ENCODE measurements at regions of chr13 and their contacts with region 1.

Region 1: GRCh38 chr13:51452361-51453206 is at the start of gene INTS6:
- DNase-seq: peak; percentile 99
- H3K4me3 Mint-ChIP-seq: peak within 1 kb of the TSS; percentile 94
- H3K27ac Mint-ChIP-seq: peak within 1 kb of the TSS; percentile 99
- H3K4me1 Mint-ChIP-seq: peaks cover 35% of the 10 kb centered on the region
- H3K27me3 Mint-ChIP-seq: no peaks in the 10 kb centered on the region
- total RNA-seq, gene INTS6: 40.4 to 41.0 TPM

Region 2: DNA sequence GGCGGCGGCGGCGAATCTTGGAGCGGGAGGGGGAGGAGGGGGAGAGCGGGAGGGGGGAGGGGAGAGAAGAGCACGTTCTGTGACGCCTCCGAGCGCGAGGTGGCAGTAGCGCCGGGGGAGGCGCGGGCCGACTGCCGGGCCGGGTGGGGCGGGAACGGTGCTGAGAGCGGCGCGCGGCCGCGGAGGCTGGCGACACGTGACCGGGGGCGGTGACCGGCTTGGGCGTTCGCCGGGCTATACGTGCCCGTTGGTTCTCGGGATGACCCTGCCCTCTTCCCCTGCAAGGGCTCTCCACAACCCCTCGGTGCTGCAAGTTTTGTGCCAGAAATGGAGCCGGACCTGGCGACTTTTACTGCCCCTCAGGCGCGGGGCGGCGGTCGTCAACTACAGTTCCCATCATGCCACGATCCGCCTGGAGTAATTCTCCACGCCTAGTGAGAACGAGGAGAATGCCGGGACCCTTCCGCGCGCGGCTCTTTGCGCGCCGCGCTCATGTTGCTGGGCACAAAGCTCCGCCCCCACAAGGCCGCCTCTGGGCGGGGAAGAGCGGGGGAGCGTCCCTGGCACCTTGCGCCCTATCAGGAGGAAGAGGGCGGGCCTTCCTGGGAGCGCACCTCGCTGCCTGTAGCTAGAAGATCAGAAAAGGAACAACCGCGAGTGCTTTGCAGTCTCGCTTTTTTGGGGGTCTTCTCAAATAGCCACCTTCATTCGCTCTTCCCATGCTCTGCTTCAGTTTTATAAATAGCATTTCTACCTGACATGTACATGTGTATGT is 1659.8 kb before region 1 on chr13 and contains the start of gene KPNA3:
- CTCF ChIA-PET with region 1: no interaction called
- intact Hi-C with region 1: loop called (anchors 2 kb)
- DNase-seq: peak; percentile 96
- H3K4me3 Mint-ChIP-seq: peak within 1 kb of the TSS; percentile 92
- H3K27ac Mint-ChIP-seq: peak within 1 kb of the TSS; percentile 94
- H3K4me1 Mint-ChIP-seq: peaks cover 29% of the 10 kb centered on the region
- H3K27me3 Mint-ChIP-seq: peaks cover 4% of the 10 kb centered on the region
- total RNA-seq, gene KPNA3: 47.9 to 50.7 TPM

Region 3: DNA sequence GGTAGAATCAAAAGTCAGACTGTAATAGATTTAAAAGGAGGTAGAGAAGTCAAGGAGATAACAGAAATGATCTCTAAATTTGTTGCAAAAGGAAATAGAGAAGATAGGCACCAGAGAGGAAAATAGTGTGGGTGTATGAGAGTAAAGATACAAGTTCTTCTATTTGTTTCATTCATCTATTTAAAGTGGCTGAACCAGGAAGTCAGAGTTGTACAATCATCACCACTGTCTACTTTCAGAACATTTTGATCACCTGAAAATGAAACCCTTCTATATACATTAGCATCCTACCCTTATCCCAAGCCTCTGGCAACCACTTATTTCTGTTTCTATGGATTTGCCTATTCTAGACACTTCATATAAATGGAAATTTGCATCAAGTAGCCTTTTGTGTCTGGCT is 36.5 kb before region 1 on chr13:
- CTCF ChIA-PET with region 1: no interaction called
- intact Hi-C with region 1: loop called (anchors 1 kb)
- DNase-seq: no peak
- H3K4me3 Mint-ChIP-seq: no peak overlapping the region
- H3K27ac Mint-ChIP-seq: peak overlapping the region; percentile 62
- H3K4me1 Mint-ChIP-seq: peaks cover 63% of the 10 kb centered on the region
- H3K27me3 Mint-ChIP-seq: no peaks in the 10 kb centered on the region

Region 4: DNA sequence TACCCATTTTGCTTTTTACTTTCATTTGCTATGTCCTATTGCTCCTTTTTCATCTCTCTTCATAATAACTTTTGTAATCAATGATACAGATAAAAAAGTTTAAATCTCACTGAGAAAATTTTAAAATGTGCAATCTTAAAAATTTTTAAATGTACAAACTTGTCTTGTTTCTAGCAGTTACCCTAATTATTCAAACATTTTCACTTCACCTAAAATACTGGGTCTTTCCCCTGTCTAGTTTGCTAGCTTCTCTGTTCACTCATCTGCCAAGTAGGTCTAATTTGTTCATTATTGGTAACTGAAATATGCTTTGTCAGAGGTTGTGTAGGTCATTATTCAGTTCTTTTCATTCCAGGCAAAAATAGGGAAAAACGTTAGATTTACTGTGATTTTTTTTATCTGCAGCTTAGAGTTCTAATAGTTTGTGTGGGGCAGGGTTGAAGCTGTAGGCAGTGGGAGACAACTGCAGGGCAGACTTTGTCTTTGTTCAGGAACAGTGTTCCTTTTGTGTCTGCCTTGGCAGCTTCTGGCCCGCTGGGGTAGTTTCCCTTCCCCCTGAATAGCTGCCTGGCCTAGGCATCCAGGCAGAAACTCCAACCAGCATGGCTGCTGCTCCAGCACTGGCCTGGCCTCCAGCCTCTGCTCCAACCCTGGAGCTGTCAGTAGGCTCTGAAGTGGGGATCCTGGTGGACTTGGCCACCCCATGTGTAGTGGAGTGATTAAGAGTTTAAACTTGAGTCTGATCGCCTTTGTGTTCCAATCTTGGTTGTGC is 180.2 kb after region 1 on chr13:
- CTCF ChIA-PET with region 1: no interaction called
- intact Hi-C with region 1: loop called (anchors 5 kb)
- DNase-seq: no peak
- H3K4me3 Mint-ChIP-seq: no peak overlapping the region
- H3K27ac Mint-ChIP-seq: no peak overlapping the region
- H3K4me1 Mint-ChIP-seq: peaks cover 57% of the 10 kb centered on the region
- H3K27me3 Mint-ChIP-seq: no peaks in the 10 kb centered on the region

Region 5: GRCh38 chr13:51797664-51798488 is 345.3 kb after region 1 on chr13:
- CTCF ChIA-PET with region 1: interaction called, 14 read pairs
- intact Hi-C with region 1: loop called (anchors 1 kb)
- DNase-seq: peak; percentile 83
- H3K4me3 Mint-ChIP-seq: no peak overlapping the region
- H3K27ac Mint-ChIP-seq: no peak overlapping the region
- H3K4me1 Mint-ChIP-seq: peaks cover 43% of the 10 kb centered on the region
- H3K27me3 Mint-ChIP-seq: no peaks in the 10 kb centered on the region

Region 6: GRCh38 chr13:52128714-52129700 is 676.4 kb after region 1 on chr13 and contains the start of gene NEK5:
- CTCF ChIA-PET with region 1: no interaction called
- intact Hi-C with region 1: loop called (anchors 10 kb)
- DNase-seq: peak; percentile 68
- H3K4me3 Mint-ChIP-seq: peak within 1 kb of the TSS; percentile 70
- H3K27ac Mint-ChIP-seq: no peak within 1 kb of the TSS
- H3K4me1 Mint-ChIP-seq: peaks cover 12% of the 10 kb centered on the region
- H3K27me3 Mint-ChIP-seq: peaks cover 2% of the 10 kb centered on the region
- total RNA-seq, gene NEK5: 0.10 to 0.14 TPM

Measured in activated naive CD4-positive, alpha-beta T cell treated with anti-CD3 and anti-CD28 coated beads for 36 hours (primary cell).